ENCODE measurements at regions of chr18 and their contacts with region 1.

Region 1: DNA sequence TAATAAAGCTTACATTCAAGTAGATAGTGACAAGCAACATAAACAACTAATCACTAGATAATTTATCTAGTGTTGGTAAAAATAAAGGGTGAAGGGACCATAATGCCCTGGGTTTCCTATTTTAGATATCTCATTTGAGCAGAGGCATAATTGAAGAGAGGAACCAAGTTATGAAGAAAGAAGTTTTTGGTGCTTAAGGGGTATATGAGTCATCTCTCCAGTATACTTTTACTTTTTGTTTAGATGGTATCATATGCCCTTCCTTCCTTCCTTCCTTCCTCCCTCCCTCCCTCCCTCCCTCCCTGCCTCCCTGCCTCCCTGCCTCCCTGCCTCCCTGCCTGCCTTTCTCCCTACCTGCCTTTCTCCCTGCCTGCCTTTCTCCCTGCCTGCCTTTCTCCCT is 1053.5 kb upstream of the CELF4 start:
- DNase-seq: no peak
- H3K4me3 ChIP-seq: no peak overlapping the region
- CTCF ChIP-seq: no peak
- POLR2A ChIP-seq: no peak

Region 2: DNA sequence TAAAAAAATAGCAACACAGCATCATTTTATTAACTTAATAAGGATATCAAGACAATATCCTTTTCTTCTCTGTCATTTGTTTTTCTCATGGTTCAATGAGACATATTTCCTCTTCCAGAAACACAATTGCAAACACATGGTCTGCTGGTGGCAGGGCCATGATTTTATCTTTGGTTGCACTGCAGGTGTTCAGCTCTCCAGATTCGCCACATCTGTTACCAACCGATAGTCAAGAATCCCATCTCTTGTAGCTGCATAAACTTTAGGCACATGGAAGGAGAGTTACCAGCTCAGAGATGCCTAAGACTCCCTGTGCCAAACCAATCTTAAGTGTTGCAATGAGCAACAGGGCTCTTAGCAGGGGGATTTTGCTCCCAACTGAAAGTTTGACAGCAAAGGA is 249.6 kb after region 1 on chr18:
- intact Hi-C with region 1: no loop called
- DNase-seq: no peak
- H3K4me3 ChIP-seq: no peak overlapping the region
- CTCF ChIP-seq: no peak
- POLR2A ChIP-seq: no peak

Region 3: GRCh38 chr18:39776766-39777165 is 1157.6 kb after region 1 on chr18:
- intact Hi-C with region 1: loop called (anchors 5 kb)
- DNase-seq: no peak
- H3K4me3 ChIP-seq: no peak overlapping the region
- CTCF ChIP-seq: no peak
- POLR2A ChIP-seq: no peak

Measured in lower leg skin (tissue), 4 donors.